T-cell (primary cell): ENCODE measurements at regions of chr14 and their contacts with region 1.

Region 1: GRCh38 chr14:75660630-75661494 is at the starts of genes ERG28 and TTLL5:
- DNase-seq: peak; percentile 90 to 98 (median 95)
- ATAC-seq: peak; percentile 94 to 97 (median 95)
- H3K4me3 ChIP-seq: peak within 1 kb of the TSS; percentile 68 to 87
- H3K4me3 Mint-ChIP-seq: peak within 1 kb of the TSS; percentile 94 to 100 (median 95)
- H3K27ac ChIP-seq: peak within 1 kb of the TSS; percentile 73
- H3K27ac Mint-ChIP-seq: peak within 1 kb of the TSS; percentile 97 to 100
- H3K4me1 ChIP-seq: peaks cover 6 to 14% of the 10 kb centered on the region in 2 experiments
- H3K4me1 Mint-ChIP-seq: peaks cover 20 to 37% (median 33%) of the 10 kb centered on the region in 3 donors
- H3K27me3 ChIP-seq: no peaks in the 10 kb centered on the region
- H3K27me3 Mint-ChIP-seq: no peaks in the 10 kb centered on the region
- total RNA-seq, gene ERG28: 9.8 to 14.4 (median 12.3) TPM
- total RNA-seq, gene TTLL5: 15.4 to 36.2 (median 22.2) TPM

Region 2: DNA sequence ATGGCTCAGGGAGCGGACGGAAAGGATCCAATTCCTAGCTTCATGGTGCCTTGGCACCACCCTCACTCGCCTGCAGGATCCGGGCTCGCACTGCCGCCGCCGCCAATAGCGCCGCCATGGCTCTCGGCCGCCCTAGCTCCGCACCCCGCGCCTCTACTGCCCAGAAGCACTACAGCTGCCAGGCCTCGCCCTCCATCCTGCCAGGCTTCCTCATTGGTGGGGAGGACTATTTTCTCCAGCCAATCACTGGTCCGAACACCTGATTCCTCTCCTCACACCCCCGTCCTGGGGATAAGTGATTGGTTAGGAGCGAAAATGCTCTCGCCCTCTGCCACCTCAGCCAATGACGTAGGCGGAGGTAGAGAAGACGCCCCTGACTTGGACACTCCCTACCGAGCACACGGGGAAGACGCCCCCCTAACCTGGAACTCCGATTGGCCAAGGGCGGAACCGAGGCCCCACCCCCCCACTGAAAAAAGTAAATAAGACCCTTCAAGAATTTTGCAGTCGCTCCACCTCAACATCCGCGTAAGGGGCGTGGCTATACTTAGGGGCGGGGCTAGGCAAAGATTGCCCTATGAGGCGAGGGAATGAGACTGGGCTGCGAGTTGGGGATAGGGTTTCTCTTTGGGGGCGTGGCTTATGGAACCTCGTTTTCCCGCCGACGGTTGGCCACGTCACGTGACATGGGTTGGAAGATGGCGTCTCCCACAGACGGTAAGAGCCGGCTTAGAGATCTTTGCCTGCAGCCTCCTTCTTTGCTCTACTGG is 1576.4 kb before region 1 on chr14 and contains the starts of genes ALDH6A1 and LIN52:
- CTCF ChIA-PET with region 1: no interaction called
- POLR2A ChIA-PET with region 1: interaction called in 1 of 2 experiments, 12 read pairs
- DNase-seq: peak; percentile 95 to 100 (median 100)
- ATAC-seq: peak; percentile 90 to 92 (median 92)
- H3K4me3 ChIP-seq: peak within 1 kb of the TSS; percentile 80
- H3K4me3 Mint-ChIP-seq: peak within 1 kb of the TSS; percentile 92 to 100 (median 98)
- H3K27ac ChIP-seq: peak within 1 kb of the TSS; percentile 55
- H3K27ac Mint-ChIP-seq: peak within 1 kb of the TSS; percentile 93 to 99
- H3K4me1 ChIP-seq: peaks cover 13% of the 10 kb centered on the region in 2 experiments
- H3K4me1 Mint-ChIP-seq: peaks cover 34 to 38% (median 36%) of the 10 kb centered on the region in 3 donors
- H3K27me3 ChIP-seq: no peaks in the 10 kb centered on the region
- H3K27me3 Mint-ChIP-seq: no peaks in the 10 kb centered on the region
- total RNA-seq, gene ALDH6A1: 11.0 to 15.9 (median 14.8) TPM
- total RNA-seq, gene LIN52: 9.7 to 11.2 (median 10.7) TPM